ENCODE measurements at regions of chr11 and their contacts with region 1.

Region 1: GRCh38 chr11:72430741-72431570 is 3.4 kb downstream of the CLPB start:
- DNase-seq: peak; percentile 30
- H3K4me3 ChIP-seq: no peak overlapping the region
- H3K27ac ChIP-seq: no peak overlapping the region
- H3K4me1 ChIP-seq: peaks cover 16% of the 10 kb centered on the region
- H3K27me3 ChIP-seq: no peaks in the 10 kb centered on the region
- CTCF ChIP-seq: peak; percentile 79 to 81

Region 2: GRCh38 chr11:71977743-71978418 is 453.1 kb before region 1 on chr11:
- CTCF ChIA-PET with region 1: no interaction called
- dilution Hi-C with region 1: no loop called
- in situ Hi-C with region 1: loop called in 1 of 2 experiments (anchors 5 kb)
- intact Hi-C with region 1: loop called (anchors 1 kb)
- DNase-seq: peak; percentile 33
- H3K4me3 ChIP-seq: no peak overlapping the region
- H3K27ac ChIP-seq: no peak overlapping the region
- H3K4me1 ChIP-seq: no peaks in the 10 kb centered on the region
- H3K27me3 ChIP-seq: no peaks in the 10 kb centered on the region
- CTCF ChIP-seq: peak; percentile 67 to 79

Region 3: DNA sequence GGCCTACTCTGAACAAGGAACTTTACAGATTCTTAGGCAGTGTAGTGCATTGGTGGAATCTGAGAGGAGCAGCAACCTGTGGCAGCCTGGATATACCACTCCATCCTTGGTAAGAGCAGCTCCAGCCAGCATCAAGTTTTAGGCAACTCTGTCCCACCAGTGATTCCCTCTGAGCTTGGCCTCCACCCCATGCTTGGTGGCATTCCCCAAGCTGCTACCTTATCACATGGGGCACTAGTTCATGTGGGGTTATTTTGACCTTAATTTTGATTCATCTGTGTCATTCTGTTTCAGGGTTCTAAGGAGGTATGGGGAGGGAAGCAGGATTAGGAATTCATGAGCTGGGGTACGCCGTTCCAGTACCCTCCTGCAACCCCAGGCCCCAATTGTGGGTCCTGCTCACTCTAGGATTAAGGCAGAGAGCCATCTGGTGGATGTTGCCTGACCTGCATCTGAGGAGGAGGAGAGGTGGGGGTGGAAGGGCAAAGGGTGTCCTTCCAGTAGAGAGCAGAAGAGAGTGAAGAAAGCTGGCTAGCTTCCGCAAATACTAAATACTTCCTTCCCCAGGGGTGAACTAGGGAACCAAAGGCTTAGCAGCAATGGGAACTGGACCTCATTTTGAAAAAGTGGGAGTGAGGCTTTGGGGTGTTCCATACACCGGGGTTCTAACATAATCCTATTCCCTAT is 339.8 kb before region 1 on chr11:
- CTCF ChIA-PET with region 1: no interaction called
- dilution Hi-C with region 1: no loop called
- in situ Hi-C with region 1: no loop called
- intact Hi-C with region 1: loop called (anchors 5 kb)
- DNase-seq: peak; percentile 38
- H3K4me3 ChIP-seq: no peak overlapping the region
- H3K27ac ChIP-seq: no peak overlapping the region
- H3K4me1 ChIP-seq: peaks cover 3% of the 10 kb centered on the region
- H3K27me3 ChIP-seq: no peaks in the 10 kb centered on the region
- CTCF ChIP-seq: peak; percentile 84 to 89

Region 4: DNA sequence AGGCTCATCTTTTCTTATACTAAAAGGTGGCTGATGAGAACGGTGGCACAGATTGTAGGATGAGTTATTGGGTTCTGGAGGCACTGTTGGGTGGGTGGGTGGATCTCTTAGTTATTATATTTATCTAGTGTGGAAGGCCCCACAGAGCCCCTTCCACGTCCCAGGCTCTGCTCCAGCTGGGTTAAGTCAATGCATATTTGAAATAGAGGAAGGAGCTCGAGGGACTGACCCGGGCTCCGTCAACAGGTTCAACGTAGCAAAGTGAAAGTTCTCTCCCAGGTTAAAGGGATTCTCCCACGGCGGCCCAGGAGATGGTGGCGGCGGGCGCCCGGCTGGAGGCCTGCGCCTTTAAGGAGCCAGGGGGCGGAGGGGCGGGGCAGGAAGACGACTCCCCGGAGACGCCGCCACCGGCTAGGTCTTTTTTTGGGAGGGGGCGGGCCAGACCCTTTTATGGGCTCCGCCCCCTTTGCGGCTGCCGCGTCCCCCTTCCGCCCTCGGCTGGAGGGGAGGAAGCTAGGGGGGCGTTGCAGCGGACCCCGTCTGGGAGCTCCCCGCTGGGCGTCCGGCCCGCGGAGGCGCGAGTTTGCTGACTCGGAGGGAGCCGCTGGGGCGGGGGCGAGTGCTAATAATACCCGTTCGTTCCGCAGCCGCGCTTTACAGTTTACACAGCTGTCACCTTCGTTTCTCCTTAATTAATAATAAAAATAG is 207.9 kb before region 1 on chr11:
- CTCF ChIA-PET with region 1: interaction called, 5 read pairs
- dilution Hi-C with region 1: no loop called
- in situ Hi-C with region 1: no loop called
- intact Hi-C with region 1: loop called (anchors 2 kb)
- DNase-seq: peak; percentile 87
- H3K4me3 ChIP-seq: peak overlapping the region; percentile 81 to 88 (median 85)
- H3K27ac ChIP-seq: peak overlapping the region; percentile 56
- H3K4me1 ChIP-seq: peaks cover 32% of the 10 kb centered on the region
- H3K27me3 ChIP-seq: no peaks in the 10 kb centered on the region
- CTCF ChIP-seq: peak in 1 of 2 donors; percentile 37

Region 5: DNA sequence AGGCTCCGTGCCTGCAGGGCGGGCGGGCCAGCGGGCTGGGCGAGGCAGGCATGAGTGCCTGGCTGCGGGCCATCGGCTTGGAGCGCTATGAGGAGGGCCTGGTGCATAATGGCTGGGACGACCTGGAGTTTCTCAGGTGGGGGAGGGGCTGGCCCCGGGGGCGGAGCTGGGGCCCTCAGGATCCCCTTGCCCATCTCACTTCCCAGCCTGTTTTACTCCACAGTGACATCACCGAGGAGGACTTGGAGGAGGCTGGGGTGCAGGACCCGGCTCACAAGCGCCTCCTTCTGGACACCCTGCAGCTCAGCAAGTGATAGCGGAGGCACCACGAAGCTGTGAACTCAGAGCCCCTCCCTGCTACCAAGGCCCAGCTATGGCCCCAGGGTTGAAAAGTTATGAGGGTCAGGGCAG is 192.9 kb before region 1 on chr11:
- CTCF ChIA-PET with region 1: interaction called, 4 read pairs
- dilution Hi-C with region 1: no loop called
- in situ Hi-C with region 1: no loop called
- intact Hi-C with region 1: loop called (anchors 2 kb)
- DNase-seq: peak; percentile 19
- H3K4me3 ChIP-seq: no peak overlapping the region
- H3K27ac ChIP-seq: no peak overlapping the region
- H3K4me1 ChIP-seq: peaks cover 9% of the 10 kb centered on the region
- H3K27me3 ChIP-seq: peaks cover under 1% of the 10 kb centered on the region
- CTCF ChIP-seq: peak; percentile 69 to 79

Region 6: DNA sequence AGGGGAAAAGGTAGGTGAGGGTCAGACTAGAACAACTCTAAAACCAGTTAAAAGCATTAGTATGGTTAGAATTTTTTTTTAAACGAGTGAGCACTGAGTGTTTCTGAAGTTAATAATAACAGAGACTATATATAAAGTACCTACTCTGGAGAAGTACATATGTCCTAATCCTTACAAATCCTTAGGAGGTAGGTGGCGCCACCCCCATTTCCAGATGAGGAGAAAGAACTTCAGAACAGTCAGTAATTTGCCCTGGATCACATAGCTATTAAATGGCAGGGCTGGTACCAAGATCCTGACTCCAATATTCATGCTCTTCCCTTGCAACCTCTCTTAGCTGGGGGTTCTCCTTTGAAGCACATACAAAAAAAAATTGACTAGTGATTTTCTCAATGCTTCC is 77.1 kb before region 1 on chr11:
- CTCF ChIA-PET with region 1: interaction called, 6 read pairs
- dilution Hi-C with region 1: no loop called
- in situ Hi-C with region 1: no loop called
- intact Hi-C with region 1: loop called (anchors 1 kb)
- DNase-seq: no peak
- H3K4me3 ChIP-seq: no peak overlapping the region
- H3K27ac ChIP-seq: no peak overlapping the region
- H3K4me1 ChIP-seq: no peaks in the 10 kb centered on the region
- H3K27me3 ChIP-seq: no peaks in the 10 kb centered on the region
- CTCF ChIP-seq: peak; percentile 8 to 51

Region 7: DNA sequence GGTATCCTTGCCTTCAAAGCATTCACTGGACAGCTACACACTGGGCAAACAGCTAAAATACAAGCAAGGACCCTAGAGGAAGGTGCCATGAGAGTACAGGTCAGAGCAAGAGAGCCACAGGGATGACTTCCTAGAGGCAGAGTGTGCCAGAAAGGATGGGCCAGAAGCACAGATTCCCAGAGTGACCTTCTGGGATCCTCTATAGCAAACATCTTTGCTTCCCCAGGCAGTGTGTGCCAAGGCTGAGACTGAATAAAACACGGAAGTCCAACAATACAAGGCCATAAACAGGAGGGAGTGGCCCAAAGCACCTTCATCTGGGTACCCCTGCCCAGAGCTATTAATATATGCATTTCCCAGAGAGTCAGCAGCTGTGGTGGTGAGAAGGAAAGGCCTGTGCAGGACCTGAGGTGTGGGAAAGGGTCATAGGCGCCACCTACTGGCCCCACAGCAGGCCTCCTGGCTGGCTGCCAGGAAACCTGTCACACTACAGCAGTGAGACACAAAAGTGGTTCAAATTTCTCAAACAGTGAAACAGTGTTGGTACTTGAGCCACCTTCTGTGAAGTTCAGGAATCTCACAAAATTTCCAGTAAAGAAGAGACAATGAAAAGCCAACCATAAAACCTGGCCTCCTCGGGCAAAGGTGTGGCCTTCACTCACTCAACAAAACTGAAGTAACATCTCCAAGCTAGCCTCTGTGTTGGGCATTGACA is 16.9 kb before region 1 on chr11:
- CTCF ChIA-PET with region 1: no interaction called
- dilution Hi-C with region 1: no loop called
- in situ Hi-C with region 1: no loop called
- intact Hi-C with region 1: no loop called
- DNase-seq: peak; percentile 62
- H3K4me3 ChIP-seq: no peak overlapping the region
- H3K27ac ChIP-seq: no peak overlapping the region
- H3K4me1 ChIP-seq: no peaks in the 10 kb centered on the region
- H3K27me3 ChIP-seq: no peaks in the 10 kb centered on the region
- CTCF ChIP-seq: peak; percentile 79 to 94

Region 8: DNA sequence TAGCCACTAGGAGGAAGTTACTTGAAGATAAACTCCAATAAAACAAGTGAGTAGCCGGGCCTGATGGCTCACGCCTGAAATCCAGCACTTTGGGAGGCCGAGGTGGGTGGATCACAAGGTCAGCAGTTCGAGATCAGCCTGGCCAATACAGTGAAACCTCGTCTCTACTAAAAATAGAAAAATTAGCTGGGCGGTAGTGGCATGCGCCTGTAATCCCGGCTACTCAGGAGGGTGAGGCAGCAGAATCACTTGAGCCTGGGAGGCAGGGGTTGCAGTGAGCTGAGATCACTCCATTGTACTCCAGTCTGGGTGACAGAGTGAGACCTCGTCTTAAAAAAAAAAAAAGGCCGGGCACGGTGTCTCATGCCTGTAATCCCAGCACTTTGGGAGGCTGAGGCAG is 37.3 kb after region 1 on chr11:
- CTCF ChIA-PET with region 1: no interaction called
- dilution Hi-C with region 1: no loop called
- in situ Hi-C with region 1: no loop called
- intact Hi-C with region 1: no loop called
- DNase-seq: no peak
- H3K4me3 ChIP-seq: no peak overlapping the region
- H3K27ac ChIP-seq: no peak overlapping the region
- H3K4me1 ChIP-seq: no peaks in the 10 kb centered on the region
- H3K27me3 ChIP-seq: no peaks in the 10 kb centered on the region
- CTCF ChIP-seq: no peak